Natural killer cell (primary cell): ENCODE measurements at regions of chr7 and their contacts with region 1.

Region 1: DNA sequence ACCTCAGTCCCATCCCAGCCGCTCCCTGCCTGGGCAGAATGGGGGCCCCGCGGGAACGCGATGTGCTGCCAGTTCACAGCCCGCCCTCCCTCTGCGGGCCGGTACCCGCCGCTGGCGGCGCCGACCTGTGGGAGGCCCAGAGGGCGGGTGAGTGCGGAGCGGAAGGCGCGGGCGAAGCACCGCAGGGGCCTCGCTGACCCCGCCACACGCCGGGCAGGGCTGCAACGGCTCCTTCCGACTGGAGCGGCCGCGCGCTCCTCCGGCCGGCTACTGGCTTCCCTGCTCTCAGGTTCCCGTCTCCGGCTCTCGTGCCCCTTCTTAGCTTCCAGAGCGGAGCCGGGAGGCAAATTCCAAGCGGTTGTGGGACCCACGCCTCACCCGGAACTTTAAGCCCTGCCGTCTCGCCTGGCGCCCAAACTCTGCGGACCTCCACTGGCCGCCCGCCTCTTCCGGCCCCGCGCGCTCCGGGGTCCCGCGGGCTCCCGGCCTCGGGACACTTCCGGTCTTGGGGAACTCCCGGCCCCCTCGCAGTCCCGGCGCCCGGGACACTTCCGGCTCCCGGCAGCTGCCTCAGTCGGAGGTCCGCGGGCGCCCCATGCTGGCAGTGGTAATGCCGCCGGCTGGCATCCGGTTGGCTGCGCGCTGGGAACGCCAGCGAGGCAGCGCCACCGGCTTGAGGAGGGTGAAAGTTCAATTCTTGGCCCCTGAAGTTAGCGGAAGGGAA is at the start of gene CYREN:
- DNase-seq: peak; percentile 83 to 94
- ATAC-seq: peak; percentile 78 to 90 (median 84)
- H3K4me3 ChIP-seq: peak within 1 kb of the TSS; percentile 70
- H3K4me3 Mint-ChIP-seq: peak within 1 kb of the TSS; percentile 94
- H3K27ac ChIP-seq: peak within 1 kb of the TSS; percentile 91
- H3K27ac Mint-ChIP-seq: peak within 1 kb of the TSS; percentile 96
- H3K4me1 ChIP-seq: peaks cover 49% of the 10 kb centered on the region
- H3K4me1 Mint-ChIP-seq: peaks cover 34 to 42% of the 10 kb centered on the region in 2 donors
- H3K27me3 ChIP-seq: no peaks in the 10 kb centered on the region
- H3K27me3 Mint-ChIP-seq: no peaks in the 10 kb centered on the region
- CTCF ChIP-seq: peak; percentile 63
- total RNA-seq, gene CYREN: 26.1 to 33.9 (median 33.8) TPM

Region 2: GRCh38 chr7:134632937-134633540 is 537.4 kb before region 1 on chr7:
- intact Hi-C with region 1: loop called (anchors 5 kb)
- DNase-seq: peak in 1 of 2 donors; percentile 83
- ATAC-seq: peak; percentile 73 to 90 (median 89)
- H3K4me3 ChIP-seq: no peak overlapping the region
- H3K4me3 Mint-ChIP-seq: no peak overlapping the region
- H3K27ac ChIP-seq: no peak overlapping the region
- H3K27ac Mint-ChIP-seq: no peak overlapping the region
- H3K4me1 ChIP-seq: no peaks in the 10 kb centered on the region
- H3K4me1 Mint-ChIP-seq: peaks cover 16 to 17% of the 10 kb centered on the region in 2 donors
- H3K27me3 ChIP-seq: peaks cover 3% of the 10 kb centered on the region
- H3K27me3 Mint-ChIP-seq: peaks cover 11 to 31% of the 10 kb centered on the region in 2 donors
- CTCF ChIP-seq: peak; percentile 78

Region 3: DNA sequence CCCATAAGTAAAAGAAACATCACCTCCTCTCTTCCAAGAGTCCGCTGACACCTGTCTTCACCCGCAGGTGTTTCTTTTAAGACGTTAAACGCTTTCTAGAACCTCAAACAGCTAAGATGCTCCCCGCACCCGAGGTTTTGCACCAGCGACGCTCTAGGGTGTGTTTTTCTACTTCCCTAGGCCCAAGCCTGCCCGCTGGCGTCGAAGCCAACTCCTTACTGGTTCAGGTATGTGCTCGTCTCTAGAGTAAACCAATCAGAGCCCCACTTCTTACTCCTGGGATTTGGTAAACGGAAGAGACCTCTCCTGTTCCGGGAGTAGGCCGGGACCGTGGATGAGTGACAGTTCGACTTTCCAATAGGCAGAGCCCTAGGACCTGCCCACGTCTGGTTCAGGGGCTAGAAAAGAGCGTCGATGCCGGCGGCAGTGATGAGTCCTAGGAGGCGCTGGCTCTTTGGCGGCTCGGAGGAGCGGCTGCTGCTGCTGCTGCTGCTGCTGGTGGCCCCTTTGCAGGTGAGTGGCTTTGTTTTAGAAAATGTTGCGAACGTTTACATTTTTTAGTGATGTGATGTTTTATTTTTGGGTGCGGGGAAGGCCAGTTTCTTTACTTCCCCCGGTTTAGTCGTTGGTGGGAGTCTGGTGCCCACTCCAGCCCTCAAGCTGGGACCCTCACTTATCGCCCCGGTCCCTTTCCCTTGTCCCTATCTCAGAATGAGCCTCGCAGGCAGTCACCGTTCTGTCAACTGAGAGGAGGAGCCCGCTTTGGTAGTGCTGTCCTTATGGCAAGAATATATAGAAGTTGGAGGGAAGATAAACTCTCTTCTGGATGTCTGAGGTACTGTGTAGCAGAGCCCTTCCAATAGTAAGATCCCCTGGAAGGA is 523.8 kb before region 1 on chr7 and contains the start of gene BPGM:
- intact Hi-C with region 1: loop called (anchors 5 kb)
- DNase-seq: peak; percentile 94 to 100
- ATAC-seq: peak; percentile 94 to 99 (median 97)
- H3K4me3 ChIP-seq: peak within 1 kb of the TSS; percentile 67
- H3K4me3 Mint-ChIP-seq: no peak within 1 kb of the TSS
- H3K27ac ChIP-seq: peak within 1 kb of the TSS; percentile 93
- H3K27ac Mint-ChIP-seq: no peak within 1 kb of the TSS
- H3K4me1 ChIP-seq: peaks cover 24% of the 10 kb centered on the region
- H3K4me1 Mint-ChIP-seq: peaks cover 39 to 44% of the 10 kb centered on the region in 2 donors
- H3K27me3 ChIP-seq: no peaks in the 10 kb centered on the region
- H3K27me3 Mint-ChIP-seq: no peaks in the 10 kb centered on the region
- CTCF ChIP-seq: no peak
- total RNA-seq, gene BPGM: 30.0 to 39.1 (median 31.4) TPM

Region 4: GRCh38 chr7:134986363-134987251 is 183.8 kb before region 1 on chr7 and contains the start of gene AGBL3:
- intact Hi-C with region 1: loop called (anchors 1 kb)
- DNase-seq: peak; percentile 81 to 94
- ATAC-seq: peak; percentile 91 to 92 (median 91)
- H3K4me3 ChIP-seq: peak within 1 kb of the TSS; percentile 75
- H3K4me3 Mint-ChIP-seq: peak within 1 kb of the TSS; percentile 98
- H3K27ac ChIP-seq: peak within 1 kb of the TSS; percentile 73
- H3K27ac Mint-ChIP-seq: peak within 1 kb of the TSS; percentile 96 to 99
- H3K4me1 ChIP-seq: no peaks in the 10 kb centered on the region
- H3K4me1 Mint-ChIP-seq: peaks cover 19 to 29% of the 10 kb centered on the region in 2 donors
- H3K27me3 ChIP-seq: no peaks in the 10 kb centered on the region
- H3K27me3 Mint-ChIP-seq: no peaks in the 10 kb centered on the region
- CTCF ChIP-seq: peak; percentile 75
- total RNA-seq, gene AGBL3: 0.99 to 2.3 (median 1.4) TPM

Region 5: DNA sequence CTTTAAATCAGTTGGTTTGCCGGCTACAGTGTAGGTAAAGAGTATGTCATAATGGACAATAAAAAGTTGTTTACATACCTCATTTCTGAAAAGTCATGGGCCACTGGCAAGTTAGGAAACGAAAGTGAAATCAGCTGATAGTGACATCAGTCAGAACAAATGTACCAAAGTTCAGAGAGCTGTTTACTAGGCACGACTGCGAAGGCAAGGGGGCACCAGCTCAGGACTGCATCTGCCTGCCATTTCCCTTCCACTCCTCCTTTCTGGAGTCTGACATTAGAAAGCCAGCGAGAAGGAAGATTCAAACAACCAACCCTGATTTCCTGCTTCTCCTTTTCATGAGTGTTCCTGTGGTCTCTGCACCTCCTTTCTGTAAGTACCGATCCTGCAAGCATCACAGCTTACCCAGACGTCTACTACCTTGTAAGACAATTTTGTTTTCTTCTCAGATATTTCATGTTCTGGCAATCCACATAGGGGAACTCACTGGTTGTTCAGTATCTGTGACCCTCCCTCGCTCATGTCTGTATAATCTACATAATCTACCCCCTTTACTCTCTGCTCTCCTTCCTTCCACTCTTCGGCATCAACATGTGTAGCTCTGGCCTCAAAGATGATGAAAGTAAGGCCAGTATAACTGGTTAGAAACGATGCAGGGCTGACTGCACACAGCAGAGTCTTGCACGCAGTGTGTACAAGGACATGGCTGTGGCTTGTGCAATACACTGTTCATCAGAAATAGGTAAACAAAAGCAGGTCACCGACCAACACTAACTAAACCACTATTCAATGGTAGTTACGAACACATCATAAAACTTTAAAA is 22.3 kb before region 1 on chr7 and contains the start of gene TMEM140:
- intact Hi-C with region 1: loop called (anchors 1 kb)
- DNase-seq: peak; percentile 62 to 87
- ATAC-seq: peak; percentile 78 to 87 (median 80)
- H3K4me3 ChIP-seq: peak within 1 kb of the TSS; percentile 66
- H3K4me3 Mint-ChIP-seq: peak within 1 kb of the TSS; percentile 93
- H3K27ac ChIP-seq: peak within 1 kb of the TSS; percentile 98
- H3K27ac Mint-ChIP-seq: peak within 1 kb of the TSS; percentile 95 to 98
- H3K4me1 ChIP-seq: peaks cover 21% of the 10 kb centered on the region
- H3K4me1 Mint-ChIP-seq: peaks cover 59 to 63% of the 10 kb centered on the region in 2 donors
- H3K27me3 ChIP-seq: no peaks in the 10 kb centered on the region
- H3K27me3 Mint-ChIP-seq: no peaks in the 10 kb centered on the region
- CTCF ChIP-seq: no peak
- total RNA-seq, gene TMEM140: 60.0 to 81.7 (median 76.9) TPM

Region 6: GRCh38 chr7:135211179-135211945 is 40.9 kb after region 1 on chr7 and contains the start of gene WDR91:
- intact Hi-C with region 1: loop called (anchors 5 kb)
- DNase-seq: peak; percentile 89 to 97
- ATAC-seq: peak; percentile 93 to 99 (median 94)
- H3K4me3 ChIP-seq: peak within 1 kb of the TSS; percentile 88
- H3K4me3 Mint-ChIP-seq: peak within 1 kb of the TSS; percentile 99
- H3K27ac ChIP-seq: peak within 1 kb of the TSS; percentile 87
- H3K27ac Mint-ChIP-seq: peak within 1 kb of the TSS; percentile 91 to 95
- H3K4me1 ChIP-seq: peaks cover 26% of the 10 kb centered on the region
- H3K4me1 Mint-ChIP-seq: peaks cover 17 to 35% of the 10 kb centered on the region in 2 donors
- H3K27me3 ChIP-seq: no peaks in the 10 kb centered on the region
- H3K27me3 Mint-ChIP-seq: peaks cover 0 to 3% of the 10 kb centered on the region in 2 donors
- CTCF ChIP-seq: no peak
- total RNA-seq, gene WDR91: 28.7 to 42.0 (median 39.2) TPM